Vagina (tissue), 2 donors: ENCODE measurements at regions of chr2 and their contacts with region 1.

Region 1: DNA sequence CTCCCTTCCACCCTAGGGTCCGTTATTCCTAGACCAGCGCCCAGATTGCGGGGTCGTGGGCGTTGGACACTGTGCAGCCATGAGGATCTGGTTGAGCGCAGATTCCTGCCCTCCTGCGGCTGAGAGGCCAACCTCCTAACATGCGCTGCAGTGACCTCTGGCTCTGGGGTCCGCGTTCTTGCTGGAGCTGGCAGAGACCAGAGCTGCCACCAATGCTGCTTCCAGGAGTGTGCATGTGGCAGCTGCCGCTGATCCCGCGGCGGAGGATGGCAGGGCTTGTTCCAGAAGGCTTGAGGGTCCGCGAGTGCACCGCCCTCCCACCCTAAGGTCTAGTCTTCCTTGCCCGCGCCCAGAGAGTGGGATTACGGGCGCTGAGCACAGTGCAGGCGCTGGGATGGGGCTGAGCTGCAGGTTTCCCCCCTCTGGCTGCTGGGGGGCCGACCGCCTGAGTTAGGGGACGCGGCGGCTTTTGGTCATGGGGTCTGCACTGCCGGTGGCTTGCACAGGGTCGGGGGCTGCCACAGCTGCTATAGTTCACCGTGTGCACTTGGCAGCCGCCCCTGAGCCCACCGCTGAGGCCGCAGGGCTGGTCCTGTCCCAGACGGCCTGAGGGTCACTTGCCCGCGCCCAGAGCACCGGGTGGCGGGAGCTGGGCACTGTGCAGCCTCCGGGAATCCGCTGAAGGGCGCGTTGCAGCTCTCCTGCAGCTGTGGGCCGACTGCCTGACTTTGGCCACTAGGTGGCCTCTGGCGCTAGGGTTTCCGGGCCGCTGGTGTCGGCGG is 145.9 kb downstream of the CCDC74A start:
- DNase-seq: no peak
- H3K4me3 ChIP-seq: peak overlapping the region; percentile 40 to 41
- H3K27ac ChIP-seq: no peak overlapping the region
- H3K4me1 ChIP-seq: peaks cover 31% of the 10 kb centered on the region
- H3K27me3 ChIP-seq: no peaks in the 10 kb centered on the region
- CTCF ChIP-seq: peak; percentile 55 to 88 (median 77)
- POLR2A ChIP-seq: no peak

Region 2: GRCh38 chr2:131801210-131801744 is 127.7 kb after region 1 on chr2:
- intact Hi-C with region 1: loop called (anchors 10 kb)
- DNase-seq: no peak
- H3K4me3 ChIP-seq: peak overlapping the region; percentile 38 to 43
- H3K27ac ChIP-seq: no peak overlapping the region
- H3K4me1 ChIP-seq: peaks cover 10% of the 10 kb centered on the region
- H3K27me3 ChIP-seq: no peaks in the 10 kb centered on the region
- CTCF ChIP-seq: no peak
- POLR2A ChIP-seq: no peak